ENCODE measurements at regions of chr12 and their contacts with region 1.

Region 1: DNA sequence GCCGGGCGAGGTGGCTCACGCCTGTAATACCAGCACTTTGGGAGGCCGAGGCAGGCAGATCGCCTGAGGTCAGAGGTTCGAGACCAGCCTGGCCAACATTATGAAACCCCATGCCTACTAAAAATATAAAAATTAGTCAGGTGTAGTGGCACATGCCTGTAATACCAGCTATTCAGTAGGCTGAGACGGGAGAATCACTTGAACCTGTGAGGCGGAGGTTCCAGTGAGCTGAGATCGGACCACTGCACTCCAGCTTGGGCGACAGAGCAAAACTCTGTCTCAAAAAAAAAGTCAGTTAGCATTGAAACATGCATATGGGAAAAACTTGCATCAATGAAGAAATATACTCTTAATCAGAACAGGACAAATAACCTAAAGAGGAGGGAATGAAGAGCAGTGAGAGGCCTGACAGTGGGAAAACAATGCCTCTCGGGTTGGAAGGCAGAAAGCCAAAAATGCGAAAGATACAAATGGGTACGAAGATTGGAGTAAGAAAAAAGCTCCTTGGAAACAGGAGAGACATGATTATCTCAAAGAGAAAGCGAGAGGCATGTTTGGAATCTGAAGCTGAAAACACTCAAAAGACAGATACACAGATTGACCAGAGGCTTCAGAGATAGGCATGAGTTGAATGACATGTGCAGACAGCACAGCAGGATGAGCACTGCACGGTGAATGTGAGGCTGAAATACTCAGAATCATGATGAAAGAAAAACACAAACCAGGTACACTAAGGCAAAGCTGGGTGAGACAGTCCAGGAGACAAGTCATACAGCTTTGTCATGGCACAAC is 30.6 kb downstream of the RESF1 start:
- DNase-seq: no peak
- H3K4me3 Mint-ChIP-seq: no peak overlapping the region
- H3K27ac Mint-ChIP-seq: peak overlapping the region; percentile 78
- H3K4me1 Mint-ChIP-seq: peaks cover 57% of the 10 kb centered on the region
- H3K27me3 Mint-ChIP-seq: no peaks in the 10 kb centered on the region

Region 2: DNA sequence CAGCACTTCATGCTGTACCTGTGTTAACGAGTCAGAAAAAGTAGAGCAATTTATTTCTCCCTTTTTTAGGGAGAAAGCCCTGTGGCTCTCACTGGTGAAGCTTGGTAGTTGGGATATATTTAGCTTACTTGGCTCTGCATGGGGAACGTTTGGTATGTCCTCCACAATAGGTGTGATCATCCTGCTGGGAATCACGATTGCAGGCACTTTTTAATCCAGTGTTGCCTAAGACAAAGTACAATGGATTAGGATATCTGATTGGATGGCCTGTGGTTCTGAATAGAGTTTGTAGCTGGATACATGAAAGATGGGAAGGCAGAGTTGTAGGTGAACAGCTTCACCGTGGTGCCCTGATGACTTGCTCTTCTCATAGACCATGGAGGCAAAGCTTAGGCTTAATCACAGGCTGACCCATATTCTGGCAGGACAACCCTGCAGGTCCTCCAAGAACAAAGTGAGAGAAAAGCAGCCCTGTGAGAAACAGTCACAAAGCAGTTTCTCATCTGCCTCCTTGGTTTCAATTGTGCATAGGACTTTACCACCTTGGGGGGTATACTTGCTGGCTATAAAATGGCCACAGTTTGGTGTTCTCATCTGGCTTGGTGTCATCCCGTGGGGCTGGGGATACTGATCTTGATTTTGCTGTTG is 23.1 kb before region 1 on chr12:
- CTCF ChIA-PET with region 1: interaction called, 6 read pairs
- POLR2A ChIA-PET with region 1: interaction called, 7 read pairs
- intact Hi-C with region 1: loop called (anchors 2 kb)
- DNase-seq: peak; percentile 46
- H3K4me3 Mint-ChIP-seq: peak overlapping the region; percentile 59
- H3K27ac Mint-ChIP-seq: peak overlapping the region; percentile 97
- H3K4me1 Mint-ChIP-seq: peaks cover 82% of the 10 kb centered on the region
- H3K27me3 Mint-ChIP-seq: no peaks in the 10 kb centered on the region

Region 3: GRCh38 chr12:32015036-32015435 is 25.3 kb after region 1 on chr12:
- CTCF ChIA-PET with region 1: no interaction called
- POLR2A ChIA-PET with region 1: no interaction called
- intact Hi-C with region 1: no loop called
- DNase-seq: no peak
- H3K4me3 Mint-ChIP-seq: no peak overlapping the region
- H3K27ac Mint-ChIP-seq: no peak overlapping the region
- H3K4me1 Mint-ChIP-seq: no peaks in the 10 kb centered on the region
- H3K27me3 Mint-ChIP-seq: no peaks in the 10 kb centered on the region

Region 4: DNA sequence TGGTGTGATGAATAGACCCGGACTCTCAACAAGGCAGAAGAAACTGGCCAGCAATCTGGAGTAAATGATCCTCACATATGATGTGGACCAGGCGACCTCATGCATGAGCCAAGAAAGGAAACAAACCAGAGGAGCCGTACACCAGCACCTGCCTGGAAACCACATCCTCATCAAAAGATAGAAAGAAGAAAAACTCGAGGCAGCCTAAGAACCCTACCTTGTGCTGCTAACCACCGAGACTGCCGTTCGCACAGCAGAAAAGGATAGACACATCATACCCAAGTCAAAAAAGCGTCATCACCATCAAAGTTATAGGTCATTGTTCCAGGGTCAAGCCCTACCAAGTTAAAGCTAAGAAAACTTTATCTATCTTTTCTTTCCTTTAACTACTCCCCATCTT is 36.1 kb after region 1 on chr12:
- CTCF ChIA-PET with region 1: no interaction called
- POLR2A ChIA-PET with region 1: no interaction called
- intact Hi-C with region 1: loop called (anchors 1 kb)
- DNase-seq: peak; percentile 80
- H3K4me3 Mint-ChIP-seq: peak overlapping the region; percentile 42
- H3K27ac Mint-ChIP-seq: peak overlapping the region; percentile 74
- H3K4me1 Mint-ChIP-seq: peaks cover 24% of the 10 kb centered on the region
- H3K27me3 Mint-ChIP-seq: no peaks in the 10 kb centered on the region

Measured in activated CD4-positive, alpha-beta memory T cell treated with anti-CD3 and anti-CD28 coated beads for 36 hours (primary cell).